ENCODE measurements at regions of chr3 and their contacts with region 1.

Region 1: DNA sequence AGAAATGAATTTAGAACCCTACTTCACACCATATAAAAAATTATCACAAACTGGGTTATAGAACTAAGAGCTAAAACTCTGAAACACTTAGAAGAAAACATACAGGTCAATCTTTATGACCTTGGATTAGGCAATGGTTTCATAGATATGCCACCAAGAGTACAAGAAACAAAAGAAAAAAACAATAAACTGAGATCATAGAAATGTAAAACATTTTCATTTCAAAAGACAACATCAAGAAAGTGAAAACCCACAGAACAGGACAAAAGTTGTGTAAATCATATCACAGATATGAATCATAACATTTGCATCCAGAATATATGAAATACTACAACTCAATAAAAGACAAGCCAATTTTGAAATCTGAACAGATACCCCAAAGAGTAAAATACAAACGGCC is 72.4 kb downstream of the TBL1XR1 start:
- DNase-seq: no peak
- ATAC-seq: no peak
- H3K4me3 ChIP-seq: no peak overlapping the region
- H3K4me3 Mint-ChIP-seq: peak overlapping the region in 3 of 10 donors; percentile 19 to 62 (median 33)
- H3K27ac ChIP-seq: no peak overlapping the region
- H3K27ac Mint-ChIP-seq: peak overlapping the region in 6 of 9 donors; percentile 1 to 77 (median 16)
- H3K4me1 ChIP-seq: peaks cover 0 to 29% of the 10 kb centered on the region in 2 donors
- H3K4me1 Mint-ChIP-seq: peaks cover 45 to 96% (median 87%) of the 10 kb centered on the region in 7 donors
- H3K27me3 ChIP-seq: no peaks in the 10 kb centered on the region
- H3K27me3 Mint-ChIP-seq: no peaks in the 10 kb centered on the region

Region 2: DNA sequence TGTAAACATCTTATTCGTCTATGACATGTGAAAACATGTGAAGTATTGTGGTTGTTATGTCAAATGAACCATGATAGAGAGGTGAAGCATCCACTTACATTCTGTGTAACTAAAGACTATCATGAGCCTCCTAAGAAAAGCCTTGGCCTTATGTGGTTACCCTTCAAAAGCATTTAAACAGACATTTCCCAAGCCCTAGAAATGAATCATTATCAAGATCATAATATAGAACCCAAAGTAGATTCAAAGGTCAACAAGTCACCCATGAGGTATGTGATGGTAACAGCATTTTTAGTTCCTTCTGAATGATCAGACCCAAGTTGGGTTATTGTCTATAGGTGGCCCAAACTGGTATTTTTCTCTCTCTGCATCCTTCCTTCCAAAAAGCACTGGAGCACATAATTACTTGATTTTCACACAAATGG is 335.6 kb before region 1 on chr3:
- CTCF ChIA-PET with region 1: no interaction called
- POLR2A ChIA-PET with region 1: no interaction called
- intact Hi-C with region 1: no loop called
- DNase-seq: no peak
- ATAC-seq: no peak
- H3K4me3 ChIP-seq: no peak overlapping the region
- H3K4me3 Mint-ChIP-seq: no peak overlapping the region
- H3K27ac ChIP-seq: no peak overlapping the region
- H3K27ac Mint-ChIP-seq: no peak overlapping the region
- H3K4me1 ChIP-seq: no peaks in the 10 kb centered on the region
- H3K4me1 Mint-ChIP-seq: no peaks in the 10 kb centered on the region
- H3K27me3 ChIP-seq: no peaks in the 10 kb centered on the region
- H3K27me3 Mint-ChIP-seq: peaks cover 0 to 20% (median 5%) of the 10 kb centered on the region in 5 donors

Region 3: GRCh38 chr3:177137774-177138705 is 13.2 kb after region 1 on chr3:
- CTCF ChIA-PET with region 1: no interaction called
- POLR2A ChIA-PET with region 1: interaction called, 3 read pairs
- intact Hi-C with region 1: loop called in 1 of 2 experiments (anchors 2 kb)
- DNase-seq: no peak
- ATAC-seq: no peak
- H3K4me3 ChIP-seq: no peak overlapping the region
- H3K4me3 Mint-ChIP-seq: peak overlapping the region in 9 of 10 donors; percentile 35 to 75 (median 55)
- H3K27ac ChIP-seq: no peak overlapping the region
- H3K27ac Mint-ChIP-seq: peak overlapping the region; percentile 28 to 85 (median 74)
- H3K4me1 ChIP-seq: peaks cover 26 to 29% of the 10 kb centered on the region in 2 donors
- H3K4me1 Mint-ChIP-seq: peaks cover 54 to 85% (median 69%) of the 10 kb centered on the region in 7 donors
- H3K27me3 ChIP-seq: no peaks in the 10 kb centered on the region
- H3K27me3 Mint-ChIP-seq: no peaks in the 10 kb centered on the region

Region 4: DNA sequence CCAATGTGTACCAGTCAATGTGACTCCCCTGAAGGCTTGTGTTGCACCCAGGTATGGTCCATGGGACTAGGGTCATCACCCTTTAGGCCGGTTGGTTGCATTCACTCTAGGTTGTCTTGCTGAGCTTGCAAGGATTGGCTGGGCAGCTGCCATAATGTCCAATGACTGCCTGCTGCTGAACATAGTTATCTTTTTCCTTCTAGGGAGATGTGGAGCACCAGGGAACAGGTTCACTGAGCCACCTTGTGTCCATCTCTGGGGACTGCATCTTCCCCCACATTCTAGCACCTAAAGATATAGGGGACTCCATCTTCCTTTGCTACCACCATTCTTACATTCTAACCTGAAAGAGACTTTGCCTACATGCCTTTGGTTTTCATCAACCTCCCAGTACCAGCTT is 652.8 kb after region 1 on chr3:
- CTCF ChIA-PET with region 1: no interaction called
- POLR2A ChIA-PET with region 1: no interaction called
- intact Hi-C with region 1: loop called in 1 of 2 experiments (anchors 5 kb)
- DNase-seq: peak in 5 of 9 donors; percentile 10 to 35 (median 26)
- ATAC-seq: peak; percentile 65
- H3K4me3 ChIP-seq: no peak overlapping the region
- H3K4me3 Mint-ChIP-seq: peak overlapping the region in 1 of 10 donors; percentile 16
- H3K27ac ChIP-seq: no peak overlapping the region
- H3K27ac Mint-ChIP-seq: peak overlapping the region in 3 of 9 donors; percentile 21 to 55 (median 29)
- H3K4me1 ChIP-seq: peaks cover 9 to 18% of the 10 kb centered on the region in 2 donors
- H3K4me1 Mint-ChIP-seq: peaks cover 13 to 20% (median 15%) of the 10 kb centered on the region in 7 donors
- H3K27me3 ChIP-seq: no peaks in the 10 kb centered on the region
- H3K27me3 Mint-ChIP-seq: no peaks in the 10 kb centered on the region

Region 5: GRCh38 chr3:178513546-178514380 is 1388.9 kb after region 1 on chr3:
- CTCF ChIA-PET with region 1: no interaction called
- POLR2A ChIA-PET with region 1: no interaction called
- intact Hi-C with region 1: no loop called
- DNase-seq: no peak
- ATAC-seq: no peak
- H3K4me3 ChIP-seq: no peak overlapping the region
- H3K4me3 Mint-ChIP-seq: no peak overlapping the region
- H3K27ac ChIP-seq: no peak overlapping the region
- H3K27ac Mint-ChIP-seq: no peak overlapping the region
- H3K4me1 ChIP-seq: no peaks in the 10 kb centered on the region
- H3K4me1 Mint-ChIP-seq: no peaks in the 10 kb centered on the region
- H3K27me3 ChIP-seq: no peaks in the 10 kb centered on the region
- H3K27me3 Mint-ChIP-seq: peaks cover 0 to 23% (median 9%) of the 10 kb centered on the region in 5 donors